ENCODE measurements at regions of chr16 and their contacts with region 1.

Region 1: GRCh38 chr16:50806099-50807062 is 64.5 kb downstream of the CYLD start:
- DNase-seq: peak; percentile 70 to 78
- H3K4me3 ChIP-seq: peak overlapping the region; percentile 37; the same call in 1 of the 2 replicates
- H3K27ac ChIP-seq: no peak overlapping the region
- H3K4me1 ChIP-seq: no peaks in the 10 kb centered on the region
- H3K27me3 ChIP-seq: peaks cover 10% of the 10 kb centered on the region; the same call in 1 of the 2 replicates
- CTCF ChIP-seq: peak; percentile 93

Region 2: DNA sequence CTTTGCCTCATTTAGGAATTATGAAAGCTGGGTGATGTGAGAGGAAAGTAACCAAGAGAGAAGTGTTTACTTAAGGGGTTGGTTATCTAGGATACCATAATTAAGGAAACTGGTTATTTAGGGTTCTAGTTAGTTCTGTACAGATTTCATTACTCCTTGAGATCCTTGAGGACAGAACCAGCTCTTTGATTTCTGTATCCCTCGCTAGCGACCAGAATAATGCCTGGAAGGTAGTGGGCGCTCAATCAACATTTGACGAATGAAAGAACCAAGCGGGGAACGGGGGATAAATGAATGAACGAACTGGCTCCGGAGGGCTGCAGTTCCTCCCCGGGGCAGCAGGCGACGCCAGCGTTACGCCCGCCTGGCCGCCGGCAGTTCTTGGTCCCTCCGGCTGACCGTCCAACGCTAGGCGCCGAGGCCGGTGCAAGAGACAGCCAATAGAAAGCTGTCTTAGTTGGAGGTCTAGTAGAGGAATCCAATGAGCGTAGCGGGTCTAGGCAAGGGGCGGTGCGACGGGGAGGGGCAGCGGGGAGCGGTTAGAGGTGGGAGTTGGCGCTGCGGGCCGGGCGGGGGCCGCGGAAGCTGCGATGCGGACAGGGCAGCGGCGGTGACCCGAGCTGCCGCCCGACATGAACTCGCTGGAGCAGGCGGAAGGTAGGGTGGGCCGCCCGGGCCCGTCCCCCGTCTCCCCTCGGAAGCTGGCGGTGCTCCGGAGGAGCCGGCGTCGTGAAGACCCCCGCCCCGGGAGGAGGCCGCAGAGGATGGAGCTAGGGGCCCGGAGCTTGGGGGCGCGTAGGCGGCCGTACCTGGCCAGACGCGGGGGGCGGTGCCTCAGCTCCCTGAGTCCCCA is 781.5 kb before region 1 on chr16 and contains the start of gene CNEP1R1:
- CTCF ChIA-PET with region 1: interaction called, 11 read pairs
- POLR2A ChIA-PET with region 1: no interaction called
- intact Hi-C with region 1: loop called (anchors 1 kb)
- DNase-seq: peak; percentile 88 to 95
- H3K4me3 ChIP-seq: peak within 1 kb of the TSS; percentile 78
- H3K27ac ChIP-seq: no peak within 1 kb of the TSS
- H3K4me1 ChIP-seq: peaks cover 12% of the 10 kb centered on the region
- H3K27me3 ChIP-seq: peaks cover 12% of the 10 kb centered on the region; the same call in 1 of the 2 replicates
- CTCF ChIP-seq: peak; percentile 99
- total RNA-seq, gene CNEP1R1: 10.4 and 12.2 TPM in 2 replicates

Region 3: GRCh38 chr16:50326949-50327402 is 479.4 kb before region 1 on chr16:
- CTCF ChIA-PET with region 1: interaction called, 3 read pairs
- POLR2A ChIA-PET with region 1: interaction called, 3 read pairs
- intact Hi-C with region 1: loop called (anchors 1 kb)
- DNase-seq: no peak
- H3K4me3 ChIP-seq: no peak overlapping the region
- H3K27ac ChIP-seq: no peak overlapping the region
- H3K4me1 ChIP-seq: no peaks in the 10 kb centered on the region
- H3K27me3 ChIP-seq: no peaks in the 10 kb centered on the region
- CTCF ChIP-seq: peak; percentile 57

Region 4: DNA sequence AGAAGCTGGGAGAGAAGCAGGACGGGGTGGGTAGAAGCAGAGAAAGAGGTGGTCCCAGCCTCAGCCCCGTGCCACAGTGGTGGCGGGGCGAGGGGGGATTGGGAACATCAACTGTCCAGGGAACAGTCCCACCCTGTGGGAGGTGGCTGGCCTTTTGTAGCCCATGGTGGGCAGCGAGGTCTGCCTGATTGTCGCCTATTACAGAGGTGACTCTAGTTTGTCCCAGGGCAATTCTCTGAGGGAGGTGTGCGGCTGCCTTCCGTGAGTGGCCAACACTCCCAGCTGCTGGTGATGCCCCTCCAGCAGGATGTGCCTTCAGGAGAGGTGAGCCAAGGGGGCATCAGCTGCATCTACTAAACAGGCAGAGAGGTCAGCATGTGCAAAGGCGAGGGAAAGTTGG is 432.6 kb before region 1 on chr16:
- CTCF ChIA-PET with region 1: interaction called, 9 read pairs
- POLR2A ChIA-PET with region 1: no interaction called
- intact Hi-C with region 1: loop called (anchors 2 kb)
- DNase-seq: no peak
- H3K4me3 ChIP-seq: no peak overlapping the region
- H3K27ac ChIP-seq: no peak overlapping the region
- H3K4me1 ChIP-seq: 0 out of 2 replicates have a peak, but pooled peaks cover 4% of the 10 kb centered on the region
- H3K27me3 ChIP-seq: no peaks in the 10 kb centered on the region
- CTCF ChIP-seq: no peak

Region 5: GRCh38 chr16:50593410-50594150 is 212.8 kb before region 1 on chr16:
- CTCF ChIA-PET with region 1: interaction called, 23 read pairs
- POLR2A ChIA-PET with region 1: no interaction called
- intact Hi-C with region 1: no loop called
- DNase-seq: no peak
- H3K4me3 ChIP-seq: no peak overlapping the region
- H3K27ac ChIP-seq: no peak overlapping the region
- H3K4me1 ChIP-seq: no peaks in the 10 kb centered on the region
- H3K27me3 ChIP-seq: no peaks in the 10 kb centered on the region
- CTCF ChIP-seq: no peak

Region 6: DNA sequence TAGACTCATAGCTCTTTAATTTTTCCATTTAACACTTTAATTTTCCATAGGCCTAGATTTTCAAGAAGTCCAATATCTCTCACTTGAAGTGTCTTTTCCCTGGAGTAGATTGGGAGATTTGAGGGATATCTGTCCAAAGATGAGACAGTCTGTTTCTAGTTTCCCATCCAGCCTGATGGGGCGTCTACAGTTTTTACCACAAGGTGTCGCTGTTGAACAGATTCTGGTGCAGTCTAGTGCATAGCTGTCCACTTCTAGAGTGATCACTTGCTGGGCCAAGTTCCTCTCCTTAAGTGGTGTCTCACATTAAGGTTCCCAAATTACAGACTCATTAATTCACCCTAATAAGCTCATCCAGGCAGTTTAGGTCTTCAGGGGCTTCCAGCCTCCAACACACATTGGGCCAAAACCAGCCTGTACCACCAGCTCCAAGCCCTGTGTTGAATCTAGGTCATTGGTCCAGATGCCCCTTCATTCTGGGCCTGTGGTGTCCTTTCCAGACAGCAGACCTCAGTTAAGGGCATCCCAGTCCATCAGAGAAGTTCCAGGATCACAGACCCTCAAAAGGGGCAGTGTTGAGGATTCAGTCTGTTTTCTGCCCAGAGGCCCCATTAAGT is 134.6 kb before region 1 on chr16:
- CTCF ChIA-PET with region 1: interaction called, 20 read pairs
- POLR2A ChIA-PET with region 1: interaction called, 4 read pairs
- intact Hi-C with region 1: loop called (anchors 1 kb)
- DNase-seq: peak in 1 of 2 experiments; percentile 43
- H3K4me3 ChIP-seq: no peak overlapping the region
- H3K27ac ChIP-seq: no peak overlapping the region
- H3K4me1 ChIP-seq: peaks cover 26% of the 10 kb centered on the region
- H3K27me3 ChIP-seq: no peaks in the 10 kb centered on the region
- CTCF ChIP-seq: peak; percentile 90

Measured in PC-9 (cell line).